Activated CD8-positive, alpha-beta memory T cell treated with anti-CD3 and anti-CD28 coated beads, Interleukin-2, amount 10 ng/mL, durations not matched to agents 7 days and 5 days (primary cell): ENCODE measurements at regions of chr1 and their contacts with region 1.

Region 1: DNA sequence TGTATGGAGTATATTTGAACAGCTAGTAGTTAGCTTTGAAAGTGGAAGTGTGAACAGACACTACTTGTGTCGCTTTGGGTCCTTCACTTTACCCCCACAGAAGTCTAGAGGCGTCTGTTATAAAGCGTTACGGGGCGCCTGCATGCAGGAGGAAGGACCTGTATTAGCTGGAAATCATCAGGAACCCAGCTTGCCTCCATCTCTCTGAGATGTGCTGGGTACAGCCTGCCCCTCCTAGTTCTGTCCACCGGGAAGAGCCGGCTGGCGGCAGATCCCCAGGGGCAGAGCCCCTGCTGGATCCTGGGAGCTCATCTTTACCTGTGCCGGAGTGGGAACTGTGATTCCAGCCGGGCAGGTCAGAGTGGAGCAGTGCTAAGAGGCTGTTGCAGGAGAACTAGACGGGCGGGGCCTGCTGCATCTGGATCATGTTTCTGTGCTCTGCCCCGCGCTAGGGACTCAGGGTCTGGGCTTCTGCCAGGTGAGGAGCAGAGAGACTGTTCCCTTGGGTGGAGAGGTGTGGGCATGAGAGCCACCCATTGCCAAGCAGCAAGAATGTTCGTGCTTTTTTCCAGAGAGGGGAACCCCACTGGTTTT is 22.3 kb upstream of the SPSB1 start:
- DNase-seq: no peak
- ATAC-seq: no peak
- H3K4me3 Mint-ChIP-seq: no peak overlapping the region
- H3K27ac Mint-ChIP-seq: no peak overlapping the region
- H3K4me1 Mint-ChIP-seq: peaks cover 15% of the 10 kb centered on the region
- H3K27me3 Mint-ChIP-seq: peaks cover 5% of the 10 kb centered on the region

Region 2: GRCh38 chr1:9281908-9282695 is 11.7 kb after region 1 on chr1:
- CTCF ChIA-PET with region 1: interaction called, 37 read pairs
- DNase-seq: no peak
- ATAC-seq: no peak
- H3K4me3 Mint-ChIP-seq: no peak overlapping the region
- H3K27ac Mint-ChIP-seq: peak overlapping the region; percentile 91
- H3K4me1 Mint-ChIP-seq: peaks cover 71% of the 10 kb centered on the region
- H3K27me3 Mint-ChIP-seq: peaks cover 2% of the 10 kb centered on the region

Region 3: GRCh38 chr1:9302745-9303524 is 32.5 kb after region 1 on chr1:
- CTCF ChIA-PET with region 1: no interaction called
- DNase-seq: no peak
- ATAC-seq: no peak
- H3K4me3 Mint-ChIP-seq: no peak overlapping the region
- H3K27ac Mint-ChIP-seq: no peak overlapping the region
- H3K4me1 Mint-ChIP-seq: peaks cover 11% of the 10 kb centered on the region
- H3K27me3 Mint-ChIP-seq: no peaks in the 10 kb centered on the region

Region 4: GRCh38 chr1:9455487-9456234 is 185.3 kb after region 1 on chr1:
- CTCF ChIA-PET with region 1: interaction called, 64 read pairs
- DNase-seq: peak; percentile 68
- ATAC-seq: peak; percentile 78
- H3K4me3 Mint-ChIP-seq: no peak overlapping the region
- H3K27ac Mint-ChIP-seq: no peak overlapping the region
- H3K4me1 Mint-ChIP-seq: no peaks in the 10 kb centered on the region
- H3K27me3 Mint-ChIP-seq: peaks cover 32% of the 10 kb centered on the region